HEK293T (cell line): ENCODE measurements at regions of chr15 and their contacts with region 1.

Region 1: DNA sequence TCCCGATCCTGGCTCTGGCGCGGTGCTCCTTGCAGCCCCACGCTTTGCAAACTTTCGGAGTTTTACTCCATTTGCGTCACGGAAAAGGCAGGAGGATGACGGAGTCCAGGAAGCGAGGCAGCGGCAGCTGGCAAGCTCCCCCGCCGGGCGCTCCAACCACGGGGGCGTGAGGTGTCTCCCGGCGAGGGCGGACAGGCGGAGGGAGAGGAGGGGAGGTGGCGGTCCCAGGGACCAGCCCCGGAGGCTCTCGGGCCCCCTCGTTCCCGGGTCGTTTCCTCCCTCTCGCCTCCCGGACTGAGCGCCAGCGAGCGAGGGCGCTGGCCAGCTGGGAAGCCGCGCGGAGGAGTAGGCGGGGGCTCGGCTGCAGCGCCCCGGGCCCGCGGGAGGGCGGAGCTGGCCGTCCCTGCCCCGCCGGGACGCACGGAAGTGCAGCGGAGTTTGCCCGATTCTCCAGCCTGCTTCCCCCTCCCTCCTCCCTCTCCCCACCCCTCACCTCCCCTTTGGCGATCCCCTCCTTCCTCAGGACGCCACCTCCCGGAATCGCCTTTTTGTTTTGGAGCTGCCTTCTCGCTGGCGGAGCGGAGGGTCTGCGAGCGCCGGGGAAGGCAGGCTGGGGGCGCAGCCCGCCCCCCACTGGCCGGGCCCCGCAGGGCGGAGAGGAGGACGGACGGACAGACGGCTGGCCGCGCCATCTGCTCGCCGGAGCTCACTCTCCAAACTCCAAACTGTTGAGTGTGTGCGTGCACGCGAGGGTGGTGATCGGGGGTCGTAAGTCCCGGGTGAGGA is at the start of gene SNX33:
- DNase-seq: peak; percentile 78

Region 2: DNA sequence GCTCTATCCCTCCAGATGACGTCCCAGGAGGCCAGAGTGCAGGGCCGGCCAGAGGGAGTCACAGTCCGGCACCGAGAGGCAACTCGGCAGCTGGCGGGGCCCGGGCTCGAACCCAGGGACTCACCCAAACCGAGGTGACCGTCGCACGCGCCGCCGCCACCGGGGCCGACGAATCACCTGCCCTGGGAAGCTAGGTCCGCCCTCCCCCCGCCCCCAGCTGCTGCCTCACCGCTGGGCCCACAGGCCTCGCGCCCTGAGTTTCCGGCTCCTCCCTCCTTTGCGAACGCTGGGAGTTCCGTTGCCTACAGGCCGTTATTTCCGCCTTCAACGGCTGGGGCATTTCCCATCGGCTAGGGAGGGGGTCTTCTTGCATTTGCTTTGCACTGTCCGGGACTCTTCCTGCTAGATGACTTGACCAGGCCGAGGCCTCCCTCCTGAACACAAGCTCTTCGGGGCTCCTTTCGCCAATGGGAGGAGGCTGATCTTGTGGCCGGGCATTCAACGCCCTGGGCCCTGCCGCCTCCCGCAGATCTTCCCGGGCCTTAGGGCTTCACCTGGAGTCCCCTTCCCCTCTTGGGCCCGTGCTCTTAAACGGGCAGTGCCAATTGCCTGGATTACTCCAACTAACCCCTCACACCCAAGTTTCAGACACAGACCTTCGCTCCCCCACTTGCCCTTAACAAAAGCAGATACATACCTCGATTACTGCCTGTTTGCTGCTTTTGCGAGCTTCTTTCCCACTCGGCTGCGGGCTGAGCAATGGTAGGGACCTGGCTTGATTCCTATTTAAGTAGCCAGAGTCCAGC is 21.8 kb before region 1 on chr15 and contains the start of gene SNUPN:
- CTCF ChIA-PET with region 1: interaction called, 3 read pairs
- POLR2A ChIA-PET with region 1: interaction called, 93 read pairs
- DNase-seq: peak; percentile 98

Region 3: DNA sequence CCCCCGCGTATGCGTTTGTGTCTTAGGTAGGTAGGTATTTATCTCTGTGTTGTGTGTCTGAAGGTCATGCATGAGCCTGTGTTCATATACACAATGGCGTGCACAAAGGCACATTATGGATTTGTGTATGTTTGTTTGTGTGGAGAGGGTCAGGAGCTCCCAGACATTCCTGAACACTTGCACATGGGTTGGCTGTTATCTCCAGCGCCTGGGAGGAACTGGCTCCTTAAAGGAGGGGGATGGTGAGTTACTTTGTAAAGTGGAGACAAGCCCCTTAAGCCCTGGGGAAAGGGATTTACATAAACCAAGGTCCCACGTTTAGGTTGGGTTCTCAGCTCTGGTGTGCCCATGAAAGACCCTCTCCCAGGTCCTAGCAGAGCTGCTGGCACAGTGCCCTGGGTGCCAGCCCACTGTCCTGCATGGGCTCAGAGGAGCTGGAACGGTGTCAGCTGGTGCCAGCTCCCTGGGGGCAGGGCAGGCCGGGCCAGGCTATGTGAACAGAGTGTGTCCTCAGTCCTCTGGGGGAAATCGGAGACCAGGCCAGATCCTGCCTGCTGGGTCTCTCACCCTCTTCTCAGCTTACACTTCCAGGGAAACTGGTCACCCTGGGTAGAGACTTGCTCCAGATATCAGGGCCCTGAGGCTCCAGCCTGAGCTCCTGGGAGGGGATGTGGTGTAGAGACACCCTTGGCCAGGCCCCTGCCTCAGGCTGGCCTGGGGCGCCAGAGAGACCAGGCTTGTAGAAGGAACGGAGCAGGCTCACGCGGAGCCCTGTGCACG is 25.3 kb after region 1 on chr15:
- CTCF ChIA-PET with region 1: interaction called, 10 read pairs
- POLR2A ChIA-PET with region 1: interaction called, 18 read pairs
- DNase-seq: no peak